Aorta (tissue), 5 donors: ENCODE measurements at regions of chr14 and their contacts with region 1.

Region 1: GRCh38 chr14:51448831-51449670 is 202.7 kb upstream of the FRMD6 start:
- DNase-seq: peak in 1 of 2 donors; percentile 51
- ATAC-seq: peak; percentile 75
- H3K4me3 ChIP-seq: no peak overlapping the region
- H3K27ac ChIP-seq: no peak overlapping the region
- H3K4me1 ChIP-seq: no peaks in the 10 kb centered on the region
- H3K27me3 ChIP-seq: no peaks in the 10 kb centered on the region

Region 2: GRCh38 chr14:51283402-51284085 is 165.5 kb before region 1 on chr14:
- intact Hi-C with region 1: loop called in 1 of 2 experiments (anchors 10 kb)
- DNase-seq: no peak
- ATAC-seq: peak; percentile 82
- H3K4me3 ChIP-seq: no peak overlapping the region
- H3K27ac ChIP-seq: no peak overlapping the region
- H3K4me1 ChIP-seq: no peaks in the 10 kb centered on the region
- H3K27me3 ChIP-seq: no peaks in the 10 kb centered on the region